Dendritic cell treated with granulocyte-macrophage colony-stimulating factor and Interleukin-4, amounts not matched to agents 40 ng/mL and 50 ng/mL, for 4 days (primary cell): ENCODE measurements at regions of chr4 and their contacts with region 1.

Region 1: DNA sequence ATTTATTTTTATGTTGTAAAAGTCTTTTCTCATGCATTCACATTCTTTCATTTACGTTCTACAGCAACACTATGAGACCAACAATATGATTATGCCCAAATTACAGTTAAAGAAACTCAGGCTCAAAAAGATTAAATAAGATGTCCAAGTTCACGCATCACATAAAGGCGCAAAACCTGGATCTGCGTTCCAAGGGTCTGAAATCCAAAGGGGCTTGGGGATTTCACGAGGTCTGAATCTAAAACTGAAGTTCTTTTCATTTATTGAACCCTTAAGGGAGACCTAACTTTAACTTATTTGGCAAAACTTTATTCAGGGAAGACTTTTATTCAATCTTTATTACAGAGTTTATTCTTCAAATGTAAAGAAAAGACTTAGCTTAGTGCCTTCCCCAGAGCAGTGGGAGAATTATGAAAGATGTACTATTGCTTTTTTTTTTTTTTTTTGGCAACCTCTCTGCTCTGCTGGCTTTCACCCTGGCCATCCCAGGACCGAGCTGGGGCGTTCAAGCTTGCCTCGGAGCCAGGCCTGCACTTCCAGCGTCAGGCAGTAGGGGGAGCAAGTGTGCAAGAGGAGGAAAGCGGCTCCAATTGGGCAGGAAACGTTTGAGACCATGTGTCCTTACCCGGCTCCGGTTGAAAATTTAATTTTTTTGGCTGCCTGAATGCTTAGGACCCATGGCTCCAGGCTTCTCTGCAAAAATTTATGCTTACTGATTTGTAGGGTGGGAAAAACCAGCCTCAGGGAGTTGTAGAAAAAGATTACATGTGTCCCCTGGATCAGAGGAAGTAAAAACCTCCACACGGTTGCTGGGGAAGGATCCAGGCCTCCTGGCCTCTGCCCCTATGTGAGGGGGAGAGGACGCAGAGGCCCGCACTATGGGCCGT is 344.3 kb upstream of the KLF3 start:
- H3K4me3 Mint-ChIP-seq: peak overlapping the region; percentile 55
- H3K27ac Mint-ChIP-seq: peak overlapping the region; percentile 88
- H3K4me1 Mint-ChIP-seq: peaks cover 59% of the 10 kb centered on the region
- H3K27me3 Mint-ChIP-seq: no peaks in the 10 kb centered on the region

Region 2: GRCh38 chr4:38078590-38079421 is 240.9 kb before region 1 on chr4:
- intact Hi-C with region 1: loop called (anchors 10 kb)
- H3K4me3 Mint-ChIP-seq: peak overlapping the region; percentile 61
- H3K27ac Mint-ChIP-seq: peak overlapping the region; percentile 91
- H3K4me1 Mint-ChIP-seq: peaks cover 91% of the 10 kb centered on the region
- H3K27me3 Mint-ChIP-seq: no peaks in the 10 kb centered on the region

Region 3: DNA sequence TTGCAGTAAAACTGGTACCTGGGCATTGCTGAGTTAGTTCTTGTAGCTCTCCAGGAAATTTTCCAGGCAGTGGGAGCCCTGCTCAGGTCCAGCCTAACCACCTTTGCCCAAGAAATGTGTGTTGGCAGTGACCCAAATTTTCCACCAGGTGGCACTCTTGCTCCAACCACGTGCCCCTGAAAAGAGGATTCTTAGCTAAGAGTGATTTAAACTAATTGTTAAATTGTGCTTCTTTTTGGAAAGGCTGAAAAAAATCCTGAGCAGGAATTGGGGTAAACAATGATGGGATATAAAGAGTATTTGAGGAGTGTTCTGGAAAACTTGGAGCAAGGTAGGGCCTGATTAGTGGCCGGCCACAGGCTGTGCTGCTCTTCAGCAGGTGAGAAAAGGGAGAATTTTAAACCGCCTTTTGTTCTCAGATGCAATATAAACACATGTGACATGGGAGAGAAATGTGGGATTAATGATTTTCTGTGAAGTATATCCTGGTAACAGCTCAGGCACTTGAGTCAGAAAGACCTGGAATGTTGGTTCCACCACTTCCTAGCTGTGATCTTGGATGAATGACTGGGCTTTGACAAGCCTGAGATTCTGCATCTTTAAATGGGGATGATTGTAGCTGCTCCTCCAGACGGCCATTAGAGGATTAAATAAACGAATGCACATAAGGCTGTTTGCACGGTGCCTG is 139.9 kb before region 1 on chr4:
- intact Hi-C with region 1: loop called (anchors 2 kb)
- H3K4me3 Mint-ChIP-seq: no peak overlapping the region
- H3K27ac Mint-ChIP-seq: no peak overlapping the region
- H3K4me1 Mint-ChIP-seq: peaks cover 47% of the 10 kb centered on the region
- H3K27me3 Mint-ChIP-seq: peaks cover 2% of the 10 kb centered on the region

Region 4: DNA sequence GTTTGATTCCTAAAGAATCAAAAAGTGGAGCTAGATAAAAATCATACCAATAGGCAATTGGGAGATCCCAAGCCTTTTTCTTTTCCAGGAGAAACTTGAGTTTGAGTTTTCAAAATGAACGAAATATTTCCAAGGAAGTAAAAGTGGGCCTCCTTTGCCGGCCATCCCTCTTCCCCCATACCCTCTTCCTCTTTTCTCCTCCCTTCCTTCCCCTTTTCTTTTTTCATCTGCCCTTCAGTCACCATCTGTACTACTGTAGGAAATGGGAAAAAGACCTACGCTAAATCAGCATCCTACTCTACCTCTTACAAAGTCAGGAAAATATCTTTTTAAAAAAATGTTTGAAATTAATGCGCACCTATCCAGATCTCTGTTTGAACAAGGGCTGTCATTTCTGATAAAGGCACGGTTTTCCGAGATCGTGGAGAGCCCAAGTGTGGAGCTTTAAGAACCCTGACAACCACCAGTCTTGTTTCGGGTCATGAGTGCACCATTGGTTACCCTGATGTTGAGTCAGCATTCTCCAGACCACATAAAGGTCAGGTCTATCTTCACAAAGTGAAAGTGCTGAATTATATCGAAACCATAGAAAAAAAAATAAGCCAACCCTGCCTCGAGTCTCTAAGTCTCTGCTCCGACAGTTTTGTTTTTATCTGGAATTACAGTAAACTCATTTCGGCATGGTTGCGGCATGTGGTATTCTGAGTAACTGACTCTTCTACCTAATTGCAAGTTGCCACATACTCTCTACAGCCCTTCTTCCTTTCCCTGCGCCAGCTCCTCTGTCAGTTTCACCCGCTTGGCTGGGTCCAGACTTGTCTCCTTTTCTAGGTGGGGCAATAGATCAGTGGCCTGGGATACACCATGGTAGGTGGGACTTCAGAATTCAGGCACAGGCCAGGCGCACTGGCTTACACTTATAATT is 204.1 kb after region 1 on chr4:
- intact Hi-C with region 1: loop called (anchors 5 kb)
- H3K4me3 Mint-ChIP-seq: peak overlapping the region; percentile 52
- H3K27ac Mint-ChIP-seq: peak overlapping the region; percentile 83
- H3K4me1 Mint-ChIP-seq: peaks cover 72% of the 10 kb centered on the region
- H3K27me3 Mint-ChIP-seq: no peaks in the 10 kb centered on the region

Region 5: DNA sequence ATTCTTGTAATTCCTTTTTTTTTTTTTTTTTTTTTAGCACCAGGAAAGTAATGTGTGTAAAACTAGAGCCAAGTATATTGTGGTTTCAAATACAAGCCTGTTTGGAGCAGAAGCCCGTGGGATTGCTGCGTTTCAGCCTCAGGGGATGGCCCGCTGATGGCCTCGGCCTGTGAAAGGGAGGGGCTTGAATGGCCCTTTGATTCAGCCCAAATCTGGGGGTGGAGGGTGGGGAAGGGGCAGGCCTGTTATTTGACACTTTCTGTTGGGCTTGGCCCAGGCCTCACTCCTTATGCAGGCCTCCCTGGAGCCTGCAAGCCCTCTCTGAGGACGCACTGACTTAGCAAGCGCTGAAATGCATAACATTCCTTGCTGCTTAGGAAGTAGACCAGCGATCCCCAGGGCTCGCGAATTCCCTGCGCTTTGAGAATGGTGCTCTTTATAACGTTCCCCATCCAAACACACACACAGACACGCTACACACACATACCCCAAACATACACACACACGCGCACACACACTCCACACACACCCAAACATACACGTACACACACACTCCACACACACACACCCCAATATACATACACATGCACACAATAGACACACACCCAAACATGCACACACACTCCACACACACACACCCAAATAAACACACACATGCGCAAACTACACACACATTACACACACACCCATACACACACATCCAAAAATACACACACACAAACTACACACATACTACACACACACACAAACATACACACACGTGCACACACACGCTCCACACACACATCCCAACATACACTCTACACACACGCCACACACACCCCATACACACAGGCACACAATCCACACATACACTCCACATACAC is 433.5 kb after region 1 on chr4:
- intact Hi-C with region 1: no loop called
- H3K4me3 Mint-ChIP-seq: no peak overlapping the region
- H3K27ac Mint-ChIP-seq: no peak overlapping the region
- H3K4me1 Mint-ChIP-seq: peaks cover 33% of the 10 kb centered on the region
- H3K27me3 Mint-ChIP-seq: no peaks in the 10 kb centered on the region